Activated CD4-positive, alpha-beta T cell treated with anti-CD3 and anti-CD28 coated beads, Interleukin-2, amount 10 ng/mL, durations not matched to agents 24 days and 14 days (primary cell): ENCODE measurements at regions of chr5 and their contacts with region 1.

Region 1: DNA sequence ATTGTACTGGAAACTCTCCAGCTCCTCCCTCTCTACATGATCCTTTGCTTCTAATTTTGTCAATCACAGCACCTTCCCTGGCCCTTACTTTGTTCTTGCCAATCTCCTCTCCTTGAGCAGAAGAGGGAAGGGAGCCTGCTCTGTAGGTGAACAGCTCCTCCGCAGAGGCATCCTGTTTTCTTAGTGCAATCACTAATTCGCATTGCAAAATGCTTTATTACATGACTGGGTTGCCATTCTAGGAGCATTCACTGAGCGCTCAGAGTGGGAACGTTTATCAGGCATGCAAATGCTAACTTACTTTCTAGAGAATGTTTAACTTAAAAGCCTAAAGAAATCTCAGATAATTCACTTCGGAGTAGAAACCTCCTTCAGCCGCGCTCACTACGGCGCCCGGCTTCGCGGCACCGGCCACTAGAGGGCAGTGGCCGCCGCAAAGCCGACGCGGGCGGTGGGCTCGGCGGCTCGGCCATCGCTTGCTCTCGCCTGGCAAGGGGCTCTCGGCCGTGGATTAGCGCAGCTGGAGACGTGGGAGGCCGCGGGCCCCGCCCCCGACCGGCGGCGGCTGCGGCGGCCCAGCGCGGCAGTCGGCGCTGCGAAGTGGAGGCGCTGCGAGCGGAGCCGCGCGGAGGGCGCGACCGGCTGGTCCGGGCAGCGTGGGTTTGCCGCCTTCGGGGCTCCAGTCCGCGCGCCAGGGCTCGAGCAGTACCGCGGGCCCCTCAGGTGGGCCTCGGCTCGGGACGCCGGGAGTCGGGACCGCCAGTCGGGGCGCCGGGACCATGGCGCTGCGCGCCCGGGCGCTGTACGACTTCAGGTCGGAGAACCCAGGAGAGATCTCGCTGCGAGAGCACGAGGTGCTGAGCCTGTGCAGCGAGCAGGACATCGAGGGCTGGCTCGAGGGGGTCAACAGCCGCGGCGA is at the start of gene SNX18:
- DNase-seq: peak; percentile 98
- H3K4me3 Mint-ChIP-seq: peak within 1 kb of the TSS; percentile 87
- H3K27ac Mint-ChIP-seq: peak within 1 kb of the TSS; percentile 76
- H3K4me1 Mint-ChIP-seq: peaks cover 38% of the 10 kb centered on the region
- H3K27me3 Mint-ChIP-seq: peaks cover 27% of the 10 kb centered on the region
- total RNA-seq, gene SNX18: 12.9 and 13.1 TPM in 2 replicates

Region 2: GRCh38 chr5:54610197-54610944 is 92.9 kb after region 1 on chr5:
- intact Hi-C with region 1: loop called (anchors 5 kb)
- DNase-seq: peak; percentile 84
- H3K4me3 Mint-ChIP-seq: peak overlapping the region; percentile 62
- H3K27ac Mint-ChIP-seq: peak overlapping the region; percentile 78
- H3K4me1 Mint-ChIP-seq: peaks cover 25% of the 10 kb centered on the region
- H3K27me3 Mint-ChIP-seq: no peaks in the 10 kb centered on the region

Region 3: DNA sequence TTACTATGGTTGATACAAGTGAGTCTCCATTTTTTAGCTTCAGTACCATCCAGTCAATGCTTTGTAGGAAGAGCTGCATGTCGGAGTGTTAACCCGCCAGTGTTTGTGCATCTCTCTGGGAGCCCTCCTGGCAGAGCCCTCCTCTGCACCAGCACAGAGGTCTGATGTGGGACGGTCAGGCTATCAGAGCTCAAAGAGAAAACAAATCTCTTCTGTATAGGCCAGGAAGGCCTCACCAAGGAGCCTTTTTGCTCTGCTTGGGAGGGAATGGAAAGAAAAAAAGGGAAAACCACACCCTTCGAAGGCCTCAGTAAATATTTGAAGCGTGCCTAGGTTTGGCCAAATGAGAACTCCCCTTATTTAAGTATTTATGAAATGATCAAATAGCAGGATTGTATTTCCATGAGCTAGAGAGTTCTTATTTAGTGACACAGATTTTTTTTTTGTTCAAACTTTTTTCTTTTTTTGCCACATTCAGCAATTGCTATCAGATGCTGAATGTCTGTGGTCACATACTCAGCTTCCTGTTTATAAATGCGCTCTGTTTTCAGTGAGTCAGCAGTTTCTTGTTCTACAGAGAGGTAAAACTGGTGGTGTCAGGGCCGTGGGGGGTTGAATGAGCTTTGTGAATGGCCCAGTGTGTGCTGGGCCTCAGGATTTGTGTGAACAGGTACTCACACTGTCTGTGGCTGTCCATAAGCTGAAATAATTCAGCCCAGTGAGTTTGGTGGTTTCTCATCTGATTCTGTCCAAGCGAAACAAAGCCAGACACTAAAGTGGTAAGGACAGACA is 226.8 kb after region 1 on chr5:
- intact Hi-C with region 1: loop called (anchors 5 kb)
- DNase-seq: peak; percentile 88
- H3K4me3 Mint-ChIP-seq: peak overlapping the region; percentile 57
- H3K27ac Mint-ChIP-seq: peak overlapping the region; percentile 77
- H3K4me1 Mint-ChIP-seq: peaks cover 44% of the 10 kb centered on the region
- H3K27me3 Mint-ChIP-seq: peaks cover 4% of the 10 kb centered on the region

Region 4: DNA sequence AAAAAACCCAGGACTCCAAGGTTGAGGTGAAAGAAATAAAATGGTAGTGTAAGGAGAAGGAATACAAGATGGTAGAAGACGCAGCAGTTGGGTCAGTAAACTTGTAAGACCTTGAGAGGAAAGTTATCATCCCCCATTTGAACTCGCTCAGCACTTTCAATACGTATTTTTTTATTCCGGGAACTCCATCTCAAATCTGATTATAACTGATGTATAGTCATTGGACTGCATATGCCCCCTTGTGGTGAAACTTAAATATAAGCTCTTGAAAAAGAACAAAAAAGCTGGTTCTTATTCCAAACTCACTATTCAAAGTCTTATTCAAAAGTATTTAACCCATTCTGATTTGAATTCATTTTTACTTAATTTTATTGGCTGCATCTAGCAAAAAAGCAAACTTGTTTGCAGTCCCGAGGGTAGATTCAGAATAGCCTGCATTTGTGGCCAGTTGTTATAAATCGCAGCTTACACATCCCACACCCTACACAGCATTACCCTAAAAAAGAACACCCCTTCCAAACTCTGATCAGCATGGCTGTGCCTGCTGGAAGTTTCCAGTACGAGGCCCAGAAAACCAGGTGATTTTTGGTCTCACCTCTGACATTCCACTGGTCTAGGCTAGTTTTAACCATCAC is 350.0 kb after region 1 on chr5:
- intact Hi-C with region 1: loop called (anchors 1 kb)
- DNase-seq: peak; percentile 67
- H3K4me3 Mint-ChIP-seq: no peak overlapping the region
- H3K27ac Mint-ChIP-seq: no peak overlapping the region
- H3K4me1 Mint-ChIP-seq: peaks cover 22% of the 10 kb centered on the region
- H3K27me3 Mint-ChIP-seq: peaks cover 65% of the 10 kb centered on the region

Region 5: GRCh38 chr5:55037046-55037771 is 519.8 kb after region 1 on chr5:
- intact Hi-C with region 1: loop called (anchors 10 kb)
- DNase-seq: peak; percentile 90
- H3K4me3 Mint-ChIP-seq: peak overlapping the region; percentile 35
- H3K27ac Mint-ChIP-seq: peak overlapping the region; percentile 85
- H3K4me1 Mint-ChIP-seq: peaks cover 47% of the 10 kb centered on the region
- H3K27me3 Mint-ChIP-seq: no peaks in the 10 kb centered on the region

Region 6: GRCh38 chr5:55232985-55233928 is 715.8 kb after region 1 on chr5 and contains the start of gene CCNO:
- intact Hi-C with region 1: loop called (anchors 5 kb)
- DNase-seq: peak; percentile 90
- H3K4me3 Mint-ChIP-seq: peak within 1 kb of the TSS; percentile 86
- H3K27ac Mint-ChIP-seq: peak within 1 kb of the TSS; percentile 71
- H3K4me1 Mint-ChIP-seq: peaks cover 29% of the 10 kb centered on the region
- H3K27me3 Mint-ChIP-seq: peaks cover 78% of the 10 kb centered on the region
- total RNA-seq, gene CCNO: 0.26 TPM in 1 of 2 replicates, not detected in the other